Mammary epithelial cell (primary cell): ENCODE measurements at regions of chr19 and their contacts with region 1.

Region 1: GRCh38 chr19:7903244-7904073 is at the start of gene MAP2K7:
- DNase-seq: peak; percentile 99
- H3K4me3 ChIP-seq: peak within 1 kb of the TSS; percentile 69 to 96 (median 73)
- H3K27ac ChIP-seq: peak within 1 kb of the TSS; percentile 68
- H3K4me1 ChIP-seq: peaks cover 19% of the 10 kb centered on the region
- H3K27me3 ChIP-seq: no peaks in the 10 kb centered on the region
- CTCF ChIP-seq: peak; percentile 43 to 60
- total RNA-seq, gene MAP2K7: 11.3 to 33.3 TPM

Region 2: GRCh38 chr19:7715671-7716070 is 187.8 kb before region 1 on chr19:
- CTCF ChIA-PET with region 1: no interaction called
- dilution Hi-C with region 1: no loop called
- in situ Hi-C with region 1: no loop called
- intact Hi-C with region 1: no loop called
- DNase-seq: no peak
- H3K4me3 ChIP-seq: no peak overlapping the region
- H3K27ac ChIP-seq: no peak overlapping the region
- H3K4me1 ChIP-seq: no peaks in the 10 kb centered on the region
- H3K27me3 ChIP-seq: no peaks in the 10 kb centered on the region
- CTCF ChIP-seq: no peak

Region 3: GRCh38 chr19:7829561-7830271 is 73.7 kb before region 1 on chr19 and contains the start of gene EVI5L:
- CTCF ChIA-PET with region 1: no interaction called
- dilution Hi-C with region 1: no loop called
- in situ Hi-C with region 1: no loop called
- intact Hi-C with region 1: no loop called
- DNase-seq: peak; percentile 100
- H3K4me3 ChIP-seq: peak within 1 kb of the TSS; percentile 57 to 75 (median 60)
- H3K27ac ChIP-seq: no peak within 1 kb of the TSS
- H3K4me1 ChIP-seq: peaks cover 27% of the 10 kb centered on the region
- H3K27me3 ChIP-seq: no peaks in the 10 kb centered on the region
- CTCF ChIP-seq: no peak
- total RNA-seq, gene EVI5L: 15.2 to 17.5 TPM

Region 4: DNA sequence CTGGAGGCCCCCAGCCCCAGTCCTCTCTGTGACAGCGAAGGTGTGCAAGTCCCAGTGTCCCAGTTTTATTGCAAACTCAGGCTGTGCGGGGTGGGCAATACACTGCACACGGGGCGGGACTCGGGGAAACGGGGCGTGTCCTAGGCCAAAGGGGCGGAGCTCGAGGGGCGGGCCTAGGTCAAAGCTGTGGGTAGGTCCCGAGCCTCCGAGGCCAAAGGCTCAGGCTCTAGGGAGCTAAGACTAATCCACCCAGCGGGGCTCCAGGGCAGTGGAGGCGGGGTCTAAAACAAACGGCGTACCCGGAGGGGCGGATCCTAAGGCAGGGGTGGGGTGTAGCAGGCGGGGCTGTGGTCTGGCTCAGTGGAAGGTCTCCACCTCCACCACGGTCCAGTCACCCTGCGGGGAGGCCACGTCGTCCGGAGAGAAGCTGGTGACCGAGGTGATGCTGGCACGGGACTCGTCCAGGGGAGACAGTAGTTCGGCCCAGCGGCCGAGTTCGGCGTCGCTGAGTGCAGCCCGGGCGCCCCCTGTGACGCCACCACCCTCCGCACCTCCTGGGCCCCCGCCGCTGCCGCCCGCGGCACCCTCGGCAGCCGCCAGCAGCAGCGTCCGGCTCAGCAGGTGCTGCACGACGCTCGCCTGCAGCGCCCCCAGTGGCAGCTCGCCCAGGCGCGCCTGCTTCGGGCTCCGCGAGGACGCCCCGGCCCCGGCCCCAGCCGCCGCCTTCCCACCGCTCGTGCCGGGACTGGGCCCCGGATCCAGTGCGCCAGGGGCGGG is 34.6 kb before region 1 on chr19:
- CTCF ChIA-PET with region 1: no interaction called
- dilution Hi-C with region 1: no loop called
- in situ Hi-C with region 1: no loop called
- intact Hi-C with region 1: loop called (anchors 1 kb)
- DNase-seq: peak; percentile 74
- H3K4me3 ChIP-seq: peak overlapping the region; percentile 32 to 57 (median 55)
- H3K27ac ChIP-seq: no peak overlapping the region
- H3K4me1 ChIP-seq: peaks cover 32% of the 10 kb centered on the region
- H3K27me3 ChIP-seq: peaks cover 9% of the 10 kb centered on the region
- CTCF ChIP-seq: peak; percentile 40 to 61

Region 5: GRCh38 chr19:7888145-7888825 is 15.2 kb before region 1 on chr19 and contains the start of gene LRRC8E:
- CTCF ChIA-PET with region 1: interaction called, 3 read pairs
- dilution Hi-C with region 1: no loop called
- in situ Hi-C with region 1: no loop called
- intact Hi-C with region 1: loop called (anchors 1 kb)
- DNase-seq: peak; percentile 71
- H3K4me3 ChIP-seq: peak within 1 kb of the TSS; percentile 49 to 68 (median 60)
- H3K27ac ChIP-seq: peak within 1 kb of the TSS; percentile 51
- H3K4me1 ChIP-seq: peaks cover 3% of the 10 kb centered on the region
- H3K27me3 ChIP-seq: no peaks in the 10 kb centered on the region
- CTCF ChIP-seq: no peak
- total RNA-seq, gene LRRC8E: 8.5 to 14.2 TPM

Region 6: GRCh38 chr19:7919610-7920518 is 16.4 kb after region 1 on chr19 and contains the start of gene SNAPC2:
- CTCF ChIA-PET with region 1: interaction called, 7 read pairs
- dilution Hi-C with region 1: no loop called
- in situ Hi-C with region 1: no loop called
- intact Hi-C with region 1: loop called (anchors 2 kb)
- DNase-seq: peak; percentile 90
- H3K4me3 ChIP-seq: peak within 1 kb of the TSS; percentile 76 to 86 (median 79)
- H3K27ac ChIP-seq: peak within 1 kb of the TSS; percentile 52
- H3K4me1 ChIP-seq: peaks cover 32% of the 10 kb centered on the region
- H3K27me3 ChIP-seq: peaks cover 14% of the 10 kb centered on the region
- CTCF ChIP-seq: peak in 1 of 2 donors; percentile 3
- total RNA-seq, gene SNAPC2: 11.2 to 27.2 TPM

Region 7: DNA sequence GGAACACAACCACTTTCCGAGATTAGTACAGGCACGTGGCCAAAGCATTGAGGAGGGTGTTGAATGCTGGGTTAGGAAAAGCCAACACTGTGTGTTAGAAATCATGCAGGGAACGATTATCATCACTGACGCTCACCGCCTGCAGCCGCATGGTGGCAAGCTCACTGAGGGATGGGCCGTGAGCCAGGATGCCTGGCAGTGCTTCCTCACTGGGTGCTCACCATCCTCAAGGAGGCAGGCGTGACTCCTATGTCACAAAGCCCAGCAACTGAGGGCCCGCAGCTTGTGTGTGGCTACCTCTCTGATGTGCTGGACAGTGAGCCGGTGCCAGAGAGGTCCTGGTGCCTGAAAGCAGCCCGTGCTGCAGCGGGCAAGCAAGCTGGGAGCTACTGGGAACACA is 70.4 kb after region 1 on chr19:
- CTCF ChIA-PET with region 1: no interaction called
- dilution Hi-C with region 1: no loop called
- in situ Hi-C with region 1: no loop called
- intact Hi-C with region 1: no loop called
- DNase-seq: no peak
- H3K4me3 ChIP-seq: no peak overlapping the region
- H3K27ac ChIP-seq: no peak overlapping the region
- H3K4me1 ChIP-seq: no peaks in the 10 kb centered on the region
- H3K27me3 ChIP-seq: no peaks in the 10 kb centered on the region
- CTCF ChIP-seq: no peak